Activated CD8-positive, alpha-beta T cell treated with anti-CD3 and anti-CD28 coated beads for 36 hours (primary cell): ENCODE measurements at regions of chr2 and their contacts with region 1.

Region 1: DNA sequence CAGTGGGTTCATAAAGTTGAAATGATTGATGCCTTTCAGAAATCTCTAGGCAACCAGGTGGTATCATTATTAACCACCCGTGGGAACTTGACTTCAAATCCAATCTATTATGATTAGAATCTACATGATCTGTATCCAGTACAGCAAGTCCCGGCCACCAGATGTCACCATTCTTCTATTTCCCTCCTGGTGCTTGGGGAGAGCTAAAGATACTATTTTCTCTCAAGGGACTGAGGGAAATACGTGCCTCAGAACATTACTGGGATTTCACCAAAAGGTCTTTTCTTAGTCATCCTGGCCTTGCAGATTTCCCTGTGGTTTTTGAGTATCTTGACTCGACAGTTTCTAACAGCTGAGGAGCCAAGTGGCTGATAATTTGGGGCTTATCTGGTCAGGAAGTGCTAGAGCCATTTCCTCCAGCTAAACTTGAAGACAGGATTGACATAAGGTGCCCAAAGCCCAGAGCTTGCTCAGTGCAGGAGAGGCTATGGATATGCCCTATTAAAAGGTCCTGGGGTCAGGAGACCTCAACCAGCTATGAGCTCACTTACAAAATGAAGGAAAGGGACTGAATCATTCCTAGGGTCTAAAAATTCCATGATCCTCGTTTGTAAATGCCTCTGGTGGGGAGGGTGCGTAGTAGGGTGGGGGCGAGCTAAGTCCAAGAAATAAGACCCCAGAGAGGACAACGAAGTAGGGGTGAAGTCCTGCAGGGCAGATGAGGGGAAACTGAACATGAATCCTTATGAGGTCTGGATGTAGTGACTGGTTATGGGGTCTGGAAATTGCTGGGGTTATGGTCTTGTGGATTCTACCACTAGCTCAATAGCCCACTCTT is 135.4 kb upstream of the MGAT5 start:
- DNase-seq: peak; percentile 97
- ATAC-seq: peak; percentile 61
- H3K4me3 Mint-ChIP-seq: peak overlapping the region; percentile 94
- H3K27ac Mint-ChIP-seq: no peak overlapping the region
- H3K4me1 Mint-ChIP-seq: peaks cover 32% of the 10 kb centered on the region
- H3K27me3 Mint-ChIP-seq: peaks cover 2% of the 10 kb centered on the region
- CTCF ChIP-seq: peak; percentile 75

Region 2: GRCh38 chr2:133705287-133705686 is 413.2 kb before region 1 on chr2:
- CTCF ChIA-PET with region 1: no interaction called
- POLR2A ChIA-PET with region 1: no interaction called
- intact Hi-C with region 1: no loop called
- DNase-seq: no peak
- ATAC-seq: no peak
- H3K4me3 Mint-ChIP-seq: no peak overlapping the region
- H3K27ac Mint-ChIP-seq: no peak overlapping the region
- H3K4me1 Mint-ChIP-seq: no peaks in the 10 kb centered on the region
- H3K27me3 Mint-ChIP-seq: no peaks in the 10 kb centered on the region
- CTCF ChIP-seq: no peak

Region 3: GRCh38 chr2:134107402-134107801 is 11.1 kb before region 1 on chr2:
- CTCF ChIA-PET with region 1: interaction called, 14 read pairs
- POLR2A ChIA-PET with region 1: no interaction called
- intact Hi-C with region 1: no loop called
- DNase-seq: no peak
- ATAC-seq: no peak
- H3K4me3 Mint-ChIP-seq: no peak overlapping the region
- H3K27ac Mint-ChIP-seq: no peak overlapping the region
- H3K4me1 Mint-ChIP-seq: peaks cover 14% of the 10 kb centered on the region
- H3K27me3 Mint-ChIP-seq: peaks cover 3% of the 10 kb centered on the region
- CTCF ChIP-seq: no peak

Region 4: GRCh38 chr2:134198006-134198634 is 79.6 kb after region 1 on chr2:
- CTCF ChIA-PET with region 1: interaction called, 27 read pairs
- POLR2A ChIA-PET with region 1: interaction called, 3 read pairs
- intact Hi-C with region 1: no loop called
- DNase-seq: no peak
- ATAC-seq: peak; percentile 58
- H3K4me3 Mint-ChIP-seq: peak overlapping the region; percentile 29
- H3K27ac Mint-ChIP-seq: peak overlapping the region; percentile 88
- H3K4me1 Mint-ChIP-seq: peaks cover 83% of the 10 kb centered on the region
- H3K27me3 Mint-ChIP-seq: no peaks in the 10 kb centered on the region
- CTCF ChIP-seq: no peak

Region 5: DNA sequence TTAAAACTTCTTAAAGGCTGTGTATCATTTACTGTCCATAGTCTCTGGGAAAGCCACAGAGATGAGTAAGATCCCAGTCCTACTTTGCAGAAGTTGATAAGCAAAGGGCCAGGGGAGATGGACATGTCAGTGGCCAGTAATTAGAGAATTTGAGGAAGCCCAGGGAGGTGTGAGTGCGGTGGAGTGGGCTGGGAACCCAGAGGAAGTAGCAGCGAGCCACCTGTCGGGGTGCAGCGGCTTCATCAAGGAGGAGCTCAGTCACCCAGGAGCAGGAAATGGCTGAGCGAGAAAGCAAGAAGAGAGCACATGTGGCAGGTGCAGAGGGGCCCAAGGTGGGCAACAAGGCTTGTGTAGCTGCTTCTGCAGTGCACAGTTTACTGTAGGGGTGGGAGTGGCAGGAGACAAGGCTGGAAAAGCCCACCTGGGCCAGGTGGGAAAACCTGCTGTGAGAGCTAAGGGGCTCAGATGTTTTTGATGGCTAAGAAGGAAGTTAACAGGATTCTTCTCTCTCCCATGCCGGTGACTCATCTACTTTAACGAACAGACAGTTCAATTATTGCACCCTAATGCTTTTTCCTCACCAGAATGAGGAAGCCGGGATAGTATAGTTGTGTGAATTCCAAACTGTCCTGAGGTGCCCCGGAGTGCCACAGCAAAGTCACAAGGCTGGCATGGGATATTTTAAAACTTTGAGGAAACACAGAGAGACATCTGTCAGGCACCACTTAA is 100.6 kb after region 1 on chr2:
- CTCF ChIA-PET with region 1: interaction called, 62 read pairs
- POLR2A ChIA-PET with region 1: interaction called, 28 read pairs
- intact Hi-C with region 1: no loop called
- DNase-seq: peak; percentile 63
- ATAC-seq: no peak
- H3K4me3 Mint-ChIP-seq: peak overlapping the region; percentile 52
- H3K27ac Mint-ChIP-seq: peak overlapping the region; percentile 92
- H3K4me1 Mint-ChIP-seq: peaks cover 71% of the 10 kb centered on the region
- H3K27me3 Mint-ChIP-seq: no peaks in the 10 kb centered on the region
- CTCF ChIP-seq: no peak

Region 6: GRCh38 chr2:134253804-134254203 is 135.3 kb after region 1 on chr2 and contains the start of gene MGAT5:
- CTCF ChIA-PET with region 1: interaction called, 35 read pairs
- POLR2A ChIA-PET with region 1: interaction called, 3 read pairs
- intact Hi-C with region 1: no loop called
- DNase-seq: no peak
- ATAC-seq: no peak
- H3K4me3 Mint-ChIP-seq: no peak within 1 kb of the TSS
- H3K27ac Mint-ChIP-seq: peak within 1 kb of the TSS; percentile 18
- H3K4me1 Mint-ChIP-seq: peaks cover 89% of the 10 kb centered on the region
- H3K27me3 Mint-ChIP-seq: no peaks in the 10 kb centered on the region
- CTCF ChIP-seq: no peak
- total RNA-seq, gene MGAT5: 36.9 to 42.2 TPM